ENCODE measurements at regions of chr10 and their contacts with region 1.

Region 1: DNA sequence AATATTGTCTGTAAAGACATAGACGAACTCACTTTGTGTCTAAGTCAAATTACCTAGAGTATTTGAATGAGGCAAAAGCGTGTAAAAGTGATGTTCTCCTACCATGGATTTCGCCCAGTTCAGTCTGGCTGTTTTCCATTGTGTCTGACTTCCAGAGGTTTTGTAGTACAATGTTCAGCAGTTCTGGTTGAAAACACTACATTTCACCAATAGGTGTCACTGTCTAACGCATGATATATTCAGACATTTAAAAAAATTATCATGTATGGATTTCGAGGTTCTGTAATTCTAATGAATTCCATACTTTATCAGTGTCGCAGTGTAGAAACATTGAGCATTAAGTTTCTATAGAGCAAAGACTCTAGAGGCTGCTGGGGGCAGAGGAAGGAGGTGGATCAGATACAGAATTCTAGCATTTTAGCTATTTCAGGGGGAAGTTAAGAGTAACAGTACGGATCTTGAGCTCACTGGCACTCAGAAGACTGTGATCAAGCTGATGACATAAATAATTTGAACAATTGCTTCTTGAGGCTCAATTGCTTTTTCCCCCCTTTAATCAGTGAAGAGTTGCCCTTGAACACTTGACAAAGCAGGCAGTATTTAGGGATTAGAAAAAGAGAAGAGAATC is 196.9 kb upstream of the RHOBTB1 start:
- DNase-seq: peak in 2 of 3 donors; percentile 19 to 43
- ATAC-seq: peak in 1 of 2 donors; percentile 67
- H3K4me3 ChIP-seq: no peak overlapping the region
- H3K27ac ChIP-seq: no peak overlapping the region
- H3K4me1 ChIP-seq: no peaks in the 10 kb centered on the region
- H3K27me3 ChIP-seq: no peaks in the 10 kb centered on the region

Region 2: DNA sequence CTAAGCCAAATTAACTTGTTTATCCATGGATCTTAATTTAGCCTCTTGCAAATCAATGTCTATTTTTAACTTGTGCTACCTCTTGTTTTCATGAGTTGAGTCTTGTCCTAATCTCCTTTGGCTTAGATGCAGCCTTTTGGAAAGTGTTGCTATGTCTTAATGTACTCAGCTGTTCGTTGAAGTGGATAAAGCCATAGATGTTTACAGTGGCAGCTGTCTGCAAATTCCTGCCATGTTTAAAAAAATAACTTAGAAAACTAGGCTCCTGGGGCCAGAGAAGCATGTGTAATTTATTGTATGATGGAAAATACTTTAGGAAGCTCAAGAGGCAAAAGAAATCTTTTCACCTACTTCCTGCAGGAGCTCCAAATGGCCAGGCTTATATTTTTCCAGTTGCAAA is 56.2 kb after region 1 on chr10:
- intact Hi-C with region 1: loop called in 1 of 4 experiments (anchors 10 kb)
- DNase-seq: no peak
- ATAC-seq: peak in 1 of 2 donors; percentile 48
- H3K4me3 ChIP-seq: no peak overlapping the region
- H3K27ac ChIP-seq: no peak overlapping the region
- H3K4me1 ChIP-seq: no peaks in the 10 kb centered on the region
- H3K27me3 ChIP-seq: no peaks in the 10 kb centered on the region

Measured in right cardiac atrium (tissue), 5 donors.